ENCODE measurements at regions of chr6 and their contacts with region 1.

Region 1: DNA sequence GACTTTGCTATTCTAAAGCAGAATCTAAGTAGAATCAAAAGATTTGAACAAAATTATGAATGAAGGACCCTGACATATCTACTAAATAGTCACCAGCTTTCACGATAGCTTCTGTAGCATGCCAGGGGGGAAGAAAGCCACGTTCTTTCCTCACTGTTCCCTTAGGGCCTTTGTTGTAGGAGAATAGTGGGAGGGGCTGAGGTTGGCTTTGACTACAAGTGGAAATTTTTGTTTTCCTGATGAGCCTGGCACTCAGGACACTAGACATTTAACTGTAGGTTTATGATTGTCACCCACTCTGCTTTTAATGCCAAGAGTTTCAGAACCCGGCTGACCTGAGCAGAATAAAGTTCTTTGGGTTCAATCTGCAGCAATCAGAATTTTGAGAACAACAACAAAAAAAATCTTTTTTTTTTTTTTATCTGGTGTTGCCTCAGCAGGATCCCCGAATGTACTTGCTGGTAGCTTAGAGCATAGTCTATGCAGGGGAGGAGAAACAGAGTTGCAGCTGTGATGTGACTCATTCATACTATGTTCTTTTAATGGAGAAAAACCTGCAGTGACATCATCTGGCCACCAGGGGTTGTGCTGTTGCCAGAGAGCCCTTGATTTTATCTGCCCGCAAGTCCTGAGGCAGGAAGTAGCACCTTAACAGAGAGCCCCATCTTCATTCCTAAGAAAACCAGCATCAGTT is 38.5 kb downstream of the TPD52L1 start:
- DNase-seq: peak; percentile 90
- H3K4me3 Mint-ChIP-seq: no peak overlapping the region
- H3K27ac Mint-ChIP-seq: peak overlapping the region; percentile 77
- H3K4me1 Mint-ChIP-seq: peaks cover 30% of the 10 kb centered on the region
- H3K27me3 Mint-ChIP-seq: no peaks in the 10 kb centered on the region
- CTCF ChIP-seq: peak; percentile 75

Region 2: GRCh38 chr6:125170376-125170775 is 21.7 kb before region 1 on chr6:
- CTCF ChIA-PET with region 1: interaction called, 25 read pairs
- POLR2A ChIA-PET with region 1: interaction called, 20 read pairs
- intact Hi-C with region 1: no loop called
- DNase-seq: peak; percentile 85
- H3K4me3 Mint-ChIP-seq: no peak overlapping the region
- H3K27ac Mint-ChIP-seq: peak overlapping the region; percentile 47
- H3K4me1 Mint-ChIP-seq: peaks cover 23% of the 10 kb centered on the region
- H3K27me3 Mint-ChIP-seq: no peaks in the 10 kb centered on the region
- CTCF ChIP-seq: no peak

Region 3: DNA sequence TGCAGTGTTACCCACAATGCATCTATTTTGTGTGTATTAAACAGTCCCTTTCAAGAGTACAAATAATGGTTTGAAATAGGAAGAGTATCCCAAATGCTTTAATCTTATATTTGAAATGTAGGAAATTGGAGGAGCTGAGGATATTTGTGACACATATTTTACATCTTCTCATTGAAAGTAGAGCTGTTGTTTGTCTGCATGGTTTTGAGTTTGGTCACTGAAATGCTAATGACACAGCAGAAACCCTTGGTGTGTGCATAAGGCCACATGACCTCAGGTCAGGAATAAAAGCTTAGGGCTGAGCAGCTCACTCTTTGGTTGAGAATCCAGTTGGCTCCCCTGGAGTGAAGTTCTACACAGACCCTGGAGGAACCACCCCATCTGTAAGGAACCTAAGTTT is 11.3 kb after region 1 on chr6:
- CTCF ChIA-PET with region 1: interaction called, 9 read pairs
- POLR2A ChIA-PET with region 1: interaction called, 27 read pairs
- intact Hi-C with region 1: no loop called
- DNase-seq: no peak
- H3K4me3 Mint-ChIP-seq: no peak overlapping the region
- H3K27ac Mint-ChIP-seq: peak overlapping the region; percentile 93
- H3K4me1 Mint-ChIP-seq: peaks cover 37% of the 10 kb centered on the region
- H3K27me3 Mint-ChIP-seq: no peaks in the 10 kb centered on the region
- CTCF ChIP-seq: no peak

Region 4: GRCh38 chr6:125262016-125263013 is 70.3 kb after region 1 on chr6:
- CTCF ChIA-PET with region 1: interaction called, 10 read pairs
- POLR2A ChIA-PET with region 1: interaction called, 4 read pairs
- intact Hi-C with region 1: loop called (anchors 5 kb)
- DNase-seq: no peak
- H3K4me3 Mint-ChIP-seq: no peak overlapping the region
- H3K27ac Mint-ChIP-seq: no peak overlapping the region
- H3K4me1 Mint-ChIP-seq: peaks cover 14% of the 10 kb centered on the region
- H3K27me3 Mint-ChIP-seq: no peaks in the 10 kb centered on the region
- CTCF ChIP-seq: no peak

Region 5: GRCh38 chr6:125301435-125302391 is 109.7 kb after region 1 on chr6 and contains the start of gene HDDC2:
- CTCF ChIA-PET with region 1: interaction called, 9 read pairs
- POLR2A ChIA-PET with region 1: interaction called, 30 read pairs
- intact Hi-C with region 1: loop called (anchors 2 kb)
- DNase-seq: peak; percentile 60
- H3K4me3 Mint-ChIP-seq: peak within 1 kb of the TSS; percentile 79
- H3K27ac Mint-ChIP-seq: peak within 1 kb of the TSS; percentile 33
- H3K4me1 Mint-ChIP-seq: peaks cover 31% of the 10 kb centered on the region
- H3K27me3 Mint-ChIP-seq: peaks cover 7% of the 10 kb centered on the region
- CTCF ChIP-seq: no peak
- total RNA-seq, gene HDDC2: 141 and 167 TPM in 2 replicates

Measured in MCF 10A (cell line).